ENCODE measurements at regions of chr1 and their contacts with region 1.

Region 1: DNA sequence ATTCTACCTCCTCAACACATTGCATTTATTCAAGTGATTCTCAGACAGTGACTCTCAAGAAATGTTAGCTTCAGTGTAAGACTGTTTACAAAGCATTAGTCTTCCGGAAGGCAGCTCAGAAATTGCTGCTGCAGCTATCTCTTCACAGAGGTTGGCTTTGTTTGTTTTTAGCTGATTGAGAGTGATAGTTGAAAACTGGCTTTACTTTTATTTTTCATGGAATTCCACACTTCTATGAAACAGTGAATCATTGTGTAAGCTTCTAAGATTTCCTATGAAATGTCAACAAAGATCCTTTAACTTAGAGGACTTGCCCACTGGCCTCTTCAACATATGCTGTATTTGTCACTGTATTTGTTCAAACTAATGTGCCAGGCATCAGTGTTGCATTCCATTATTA is 121.3 kb downstream of the TNNI3K start:
- DNase-seq: no peak
- H3K4me3 ChIP-seq: no peak overlapping the region
- H3K4me3 Mint-ChIP-seq: no peak overlapping the region
- H3K27ac ChIP-seq: no peak overlapping the region
- H3K27ac Mint-ChIP-seq: no peak overlapping the region
- H3K4me1 ChIP-seq: no peaks in the 10 kb centered on the region
- H3K4me1 Mint-ChIP-seq: no peaks in the 10 kb centered on the region
- H3K27me3 ChIP-seq: no peaks in the 10 kb centered on the region
- H3K27me3 Mint-ChIP-seq: no peaks in the 10 kb centered on the region

Region 2: DNA sequence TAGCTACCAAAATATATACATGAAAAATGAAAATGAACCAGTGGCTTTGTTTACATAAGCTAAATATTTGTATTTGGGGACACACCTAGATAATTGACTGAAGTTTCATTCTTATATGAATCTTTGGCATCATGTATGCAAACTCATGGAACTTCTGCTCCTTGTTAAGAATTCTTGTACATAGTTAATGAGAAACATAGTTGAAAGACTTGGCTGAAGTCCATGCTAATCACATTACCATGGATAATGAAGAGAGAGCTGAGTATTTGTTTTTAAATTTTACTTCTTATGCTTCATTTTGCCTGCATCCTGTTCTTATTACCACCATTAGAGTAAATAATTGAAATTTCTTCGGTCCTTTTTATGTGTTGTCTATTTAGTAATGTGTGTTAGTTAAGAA is 47.1 kb after region 1 on chr1:
- CTCF ChIA-PET with region 1: no interaction called
- POLR2A ChIA-PET with region 1: no interaction called
- intact Hi-C with region 1: loop called (anchors 5 kb)
- DNase-seq: no peak
- H3K4me3 ChIP-seq: no peak overlapping the region
- H3K4me3 Mint-ChIP-seq: no peak overlapping the region
- H3K27ac ChIP-seq: no peak overlapping the region
- H3K27ac Mint-ChIP-seq: no peak overlapping the region
- H3K4me1 ChIP-seq: no peaks in the 10 kb centered on the region
- H3K4me1 Mint-ChIP-seq: no peaks in the 10 kb centered on the region
- H3K27me3 ChIP-seq: no peaks in the 10 kb centered on the region
- H3K27me3 Mint-ChIP-seq: peaks cover 0 to 1% of the 10 kb centered on the region in 2 donors